H1 (cell line): ENCODE measurements at regions of chr2 and their contacts with region 1.

Region 1: DNA sequence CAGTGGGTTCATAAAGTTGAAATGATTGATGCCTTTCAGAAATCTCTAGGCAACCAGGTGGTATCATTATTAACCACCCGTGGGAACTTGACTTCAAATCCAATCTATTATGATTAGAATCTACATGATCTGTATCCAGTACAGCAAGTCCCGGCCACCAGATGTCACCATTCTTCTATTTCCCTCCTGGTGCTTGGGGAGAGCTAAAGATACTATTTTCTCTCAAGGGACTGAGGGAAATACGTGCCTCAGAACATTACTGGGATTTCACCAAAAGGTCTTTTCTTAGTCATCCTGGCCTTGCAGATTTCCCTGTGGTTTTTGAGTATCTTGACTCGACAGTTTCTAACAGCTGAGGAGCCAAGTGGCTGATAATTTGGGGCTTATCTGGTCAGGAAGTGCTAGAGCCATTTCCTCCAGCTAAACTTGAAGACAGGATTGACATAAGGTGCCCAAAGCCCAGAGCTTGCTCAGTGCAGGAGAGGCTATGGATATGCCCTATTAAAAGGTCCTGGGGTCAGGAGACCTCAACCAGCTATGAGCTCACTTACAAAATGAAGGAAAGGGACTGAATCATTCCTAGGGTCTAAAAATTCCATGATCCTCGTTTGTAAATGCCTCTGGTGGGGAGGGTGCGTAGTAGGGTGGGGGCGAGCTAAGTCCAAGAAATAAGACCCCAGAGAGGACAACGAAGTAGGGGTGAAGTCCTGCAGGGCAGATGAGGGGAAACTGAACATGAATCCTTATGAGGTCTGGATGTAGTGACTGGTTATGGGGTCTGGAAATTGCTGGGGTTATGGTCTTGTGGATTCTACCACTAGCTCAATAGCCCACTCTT is 135.4 kb upstream of the MGAT5 start:
- DNase-seq: peak in 1 of 2 experiments; percentile 64
- H3K4me3 ChIP-seq: no peak overlapping the region
- H3K27ac ChIP-seq: no peak overlapping the region
- H3K4me1 ChIP-seq: peaks cover 6 to 18% (median 14%) of the 10 kb centered on the region in 4 experiments; a peak in 6 of 7 replicates
- H3K27me3 ChIP-seq: peaks cover 0 to 3% (median 0%) of the 10 kb centered on the region in 4 experiments; a peak in 1 of 7 replicates
- CTCF ChIP-seq: peak in 2 of 3 experiments; percentile 75 to 83; a peak in 3 of 4 replicates
- EP300 ChIP-seq: no peak
- POLR2A ChIP-seq: no peak
- RAD21 ChIP-seq: peak; percentile 95 to 97

Region 2: DNA sequence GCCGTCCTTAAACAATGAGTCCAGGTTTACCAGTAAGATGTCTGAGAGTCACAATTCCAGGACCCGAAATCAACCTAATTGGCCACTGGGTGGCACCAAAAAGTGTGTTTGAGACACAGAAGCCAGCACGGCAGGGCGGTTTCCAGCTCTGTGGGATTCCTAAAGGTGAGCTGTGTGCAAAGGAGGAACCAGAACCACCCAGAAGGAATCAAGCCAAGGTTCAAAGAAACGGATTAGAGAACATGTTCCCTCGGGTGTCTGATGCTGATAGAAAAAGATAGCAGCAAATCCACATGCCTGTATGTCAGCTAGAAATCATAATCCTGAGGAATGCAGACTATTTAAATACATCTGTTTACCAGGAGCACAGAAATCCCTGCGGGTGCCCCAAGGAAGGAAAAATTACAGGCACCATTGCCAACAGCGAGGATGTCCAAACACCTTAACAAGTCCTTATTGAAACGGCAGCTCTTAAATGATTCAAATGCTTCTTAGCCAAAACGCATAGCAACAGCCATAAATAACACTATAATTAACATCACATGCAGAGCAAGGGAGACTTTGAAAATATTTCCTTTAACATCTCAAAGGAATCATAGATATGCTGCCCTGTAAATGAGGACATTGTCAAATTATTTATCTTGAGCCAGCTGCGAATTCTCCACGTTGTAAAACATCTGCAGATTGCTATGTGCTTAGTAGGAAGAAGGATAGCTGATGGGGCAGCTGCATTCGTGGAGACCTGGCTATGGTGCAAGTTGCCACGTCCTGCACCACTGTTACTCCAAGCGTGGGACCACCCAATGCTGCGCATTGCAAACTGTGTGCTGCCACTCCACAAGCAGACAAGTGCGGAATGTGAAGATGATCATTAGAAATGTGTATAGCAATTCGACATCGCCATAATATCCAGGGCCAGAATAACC is 231.5 kb before region 1 on chr2:
- CTCF ChIA-PET with region 1: interaction called, 18 read pairs
- POLR2A ChIA-PET with region 1: no interaction called
- DNase-seq: peak; percentile 54 to 79
- H3K4me3 ChIP-seq: no peak overlapping the region
- H3K27ac ChIP-seq: no peak overlapping the region
- H3K4me1 ChIP-seq: peaks cover 0 to 3% (median 2%) of the 10 kb centered on the region in 4 experiments; a peak in 3 of 7 replicates
- H3K27me3 ChIP-seq: no peaks in the 10 kb centered on the region
- CTCF ChIP-seq: peak; percentile 53 to 80 (median 74)
- EP300 ChIP-seq: no peak
- POLR2A ChIP-seq: no peak
- RAD21 ChIP-seq: peak; percentile 87 to 94

Region 3: GRCh38 chr2:134207564-134208209 is 89.2 kb after region 1 on chr2:
- CTCF ChIA-PET with region 1: interaction called, 240 read pairs
- POLR2A ChIA-PET with region 1: interaction called, 37 read pairs
- DNase-seq: peak; percentile 47 to 66
- H3K4me3 ChIP-seq: no peak overlapping the region
- H3K27ac ChIP-seq: no peak overlapping the region
- H3K4me1 ChIP-seq: peaks cover 15 to 37% (median 24%) of the 10 kb centered on the region in 4 experiments
- H3K27me3 ChIP-seq: no peaks in the 10 kb centered on the region
- CTCF ChIP-seq: peak; percentile 83 to 92 (median 90)
- EP300 ChIP-seq: no peak
- POLR2A ChIP-seq: no peak
- RAD21 ChIP-seq: peak; percentile 87 to 92

Region 4: GRCh38 chr2:134238371-134238770 is 119.9 kb after region 1 on chr2:
- CTCF ChIA-PET with region 1: interaction called, 79 read pairs
- POLR2A ChIA-PET with region 1: no interaction called
- DNase-seq: no peak
- H3K4me3 ChIP-seq: no peak overlapping the region
- H3K27ac ChIP-seq: no peak overlapping the region
- H3K4me1 ChIP-seq: no peaks in the 10 kb centered on the region
- H3K27me3 ChIP-seq: no peaks in the 10 kb centered on the region; a peak in 2 of 7 replicates
- CTCF ChIP-seq: no peak
- EP300 ChIP-seq: no peak
- POLR2A ChIP-seq: no peak
- RAD21 ChIP-seq: no peak

Region 5: DNA sequence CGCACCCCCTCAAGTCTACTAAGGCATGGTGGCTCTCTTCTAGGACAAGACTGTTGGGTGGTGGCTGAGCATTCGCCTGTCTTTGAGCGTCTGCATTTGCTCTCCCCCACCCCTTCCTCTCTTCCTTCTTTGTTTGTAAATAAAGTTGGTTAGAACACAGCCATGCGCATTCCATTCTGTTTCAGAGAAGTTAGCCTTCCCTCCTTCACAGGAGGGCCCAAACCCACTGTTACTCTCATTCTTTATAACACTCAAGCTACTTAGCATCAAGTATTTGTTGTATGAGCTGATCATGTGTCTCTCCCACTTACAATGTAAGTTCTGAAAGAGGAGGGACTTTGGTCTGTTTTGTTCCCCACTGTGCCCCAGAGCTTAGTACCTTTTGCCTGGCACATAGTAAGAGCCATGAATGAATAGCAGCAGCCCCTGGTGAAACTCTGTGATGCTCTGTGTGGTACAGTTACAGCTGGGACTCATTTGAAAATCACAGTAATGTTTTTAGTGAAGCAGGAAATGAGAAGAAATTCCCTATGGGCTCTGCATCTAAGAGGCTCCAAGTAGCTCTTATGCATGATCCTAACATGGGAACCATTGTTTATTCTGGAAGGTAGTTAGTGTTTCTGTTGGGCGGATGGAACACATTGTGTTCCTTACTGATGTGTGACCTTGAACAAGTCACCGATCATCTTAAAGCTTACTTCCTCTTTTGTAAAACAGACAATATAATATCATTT is 143.1 kb after region 1 on chr2:
- CTCF ChIA-PET with region 1: interaction called, 10 read pairs
- POLR2A ChIA-PET with region 1: no interaction called
- DNase-seq: peak in 1 of 2 experiments; percentile 7
- H3K4me3 ChIP-seq: no peak overlapping the region
- H3K27ac ChIP-seq: no peak overlapping the region
- H3K4me1 ChIP-seq: peaks cover 3 to 11% (median 8%) of the 10 kb centered on the region in 4 experiments; a peak in 6 of 7 replicates
- H3K27me3 ChIP-seq: no peaks in the 10 kb centered on the region
- CTCF ChIP-seq: no peak
- EP300 ChIP-seq: no peak
- POLR2A ChIP-seq: no peak
- RAD21 ChIP-seq: no peak